ENCODE measurements at regions of chr19 and their contacts with region 1.

Region 1: DNA sequence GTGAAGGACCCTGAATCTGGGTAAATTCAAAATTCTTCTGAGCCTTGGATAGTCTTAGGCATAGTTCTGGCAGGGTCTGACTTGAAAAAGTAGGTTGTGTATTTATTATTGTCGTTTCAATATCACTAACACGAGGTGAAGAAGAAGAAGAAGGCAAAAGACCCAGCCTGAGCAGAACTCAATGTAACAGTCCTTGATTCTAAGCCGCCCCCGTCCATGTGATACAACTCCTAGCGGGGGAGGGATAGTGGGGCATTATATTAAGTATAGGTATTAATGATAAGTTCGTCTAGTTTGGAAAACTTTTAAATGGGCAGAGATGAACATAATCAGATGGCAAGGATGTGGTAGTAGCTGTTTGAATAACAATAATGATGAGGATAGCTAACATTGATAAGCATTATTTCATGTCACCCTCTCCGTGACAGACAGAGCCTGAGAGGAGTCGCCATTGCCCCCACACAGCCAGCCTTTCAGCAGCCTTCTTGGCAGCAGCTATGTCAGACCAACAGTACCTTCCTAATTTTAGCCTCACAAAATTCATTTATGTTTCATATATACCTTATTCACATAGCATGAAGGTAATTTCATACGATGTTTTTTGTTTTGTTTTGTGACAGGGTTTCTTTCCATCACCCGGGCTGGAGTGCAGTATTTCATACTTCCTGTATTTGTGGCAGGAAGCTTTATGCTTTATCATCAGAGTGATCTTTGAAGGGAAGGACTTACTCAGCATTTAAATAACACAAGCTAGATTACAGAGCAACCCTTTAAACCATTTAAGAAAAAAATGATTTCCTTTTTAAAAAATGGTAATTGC is 64.4 kb upstream of the NPAS1 start:
- DNase-seq: peak; percentile 43
- H3K4me3 Mint-ChIP-seq: peak overlapping the region; percentile 88
- H3K27ac Mint-ChIP-seq: peak overlapping the region; percentile 93
- H3K4me1 Mint-ChIP-seq: peaks cover 79% of the 10 kb centered on the region
- H3K27me3 Mint-ChIP-seq: no peaks in the 10 kb centered on the region

Region 2: DNA sequence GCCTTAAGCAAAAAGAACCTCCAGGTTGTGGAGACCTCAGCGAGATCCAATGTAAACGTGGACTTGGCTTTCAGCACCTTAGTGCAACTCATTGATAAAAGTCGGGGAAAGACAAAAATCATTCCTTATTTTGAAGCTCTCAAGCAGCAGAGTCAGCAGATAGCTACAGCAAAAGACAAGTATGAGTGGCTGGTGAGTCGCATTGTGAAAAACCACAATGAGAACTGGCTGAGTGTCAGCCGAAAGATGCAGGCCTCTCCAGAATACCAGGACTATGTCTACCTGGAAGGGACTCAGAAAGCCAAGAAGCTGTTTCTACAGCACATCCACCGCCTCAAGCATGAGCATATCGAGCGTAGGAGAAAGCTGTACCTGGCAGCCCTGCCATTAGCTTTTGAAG is 35.9 kb before region 1 on chr19:
- intact Hi-C with region 1: loop called (anchors 2 kb)
- DNase-seq: no peak
- H3K4me3 Mint-ChIP-seq: no peak overlapping the region
- H3K27ac Mint-ChIP-seq: no peak overlapping the region
- H3K4me1 Mint-ChIP-seq: peaks cover 37% of the 10 kb centered on the region
- H3K27me3 Mint-ChIP-seq: no peaks in the 10 kb centered on the region

Region 3: GRCh38 chr19:46967578-46968027 is 12.4 kb after region 1 on chr19:
- intact Hi-C with region 1: loop called (anchors 1 kb)
- DNase-seq: peak; percentile 24
- H3K4me3 Mint-ChIP-seq: peak overlapping the region; percentile 58
- H3K27ac Mint-ChIP-seq: peak overlapping the region; percentile 77
- H3K4me1 Mint-ChIP-seq: peaks cover 49% of the 10 kb centered on the region
- H3K27me3 Mint-ChIP-seq: no peaks in the 10 kb centered on the region

Region 4: GRCh38 chr19:47109541-47110375 is 154.6 kb after region 1 on chr19:
- intact Hi-C with region 1: no loop called
- DNase-seq: peak; percentile 65
- H3K4me3 Mint-ChIP-seq: peak overlapping the region; percentile 92
- H3K27ac Mint-ChIP-seq: peak overlapping the region; percentile 99
- H3K4me1 Mint-ChIP-seq: peaks cover 64% of the 10 kb centered on the region
- H3K27me3 Mint-ChIP-seq: no peaks in the 10 kb centered on the region

Measured in activated T-helper 1 cell treated with anti-CD3 and anti-CD28 coated beads, Interleukin-12 subunit alpha, Interleukin-12 subunit beta, Interleukin-2, Interleukin-4 antibody, amounts not matched to agents 30 ng/mL and 10 ng/mL and 1 ng/mL, durations not matched to agents 14 hours and 24 hours and 36 hours (primary cell).